MCF 10A (cell line): ENCODE measurements at regions of chr1 and their contacts with region 1.

Region 1: GRCh38 chr1:46477153-46477929 is 12.3 kb upstream of the DMBX1 start:
- DNase-seq: peak; percentile 83
- H3K4me3 Mint-ChIP-seq: no peak overlapping the region
- H3K27ac Mint-ChIP-seq: no peak overlapping the region
- H3K4me1 Mint-ChIP-seq: no peaks in the 10 kb centered on the region
- H3K27me3 Mint-ChIP-seq: no peaks in the 10 kb centered on the region
- CTCF ChIP-seq: peak; percentile 97

Region 2: GRCh38 chr1:46442317-46443161 is 34.8 kb before region 1 on chr1:
- CTCF ChIA-PET with region 1: interaction called, 6 read pairs
- POLR2A ChIA-PET with region 1: no interaction called
- intact Hi-C with region 1: loop called (anchors 2 kb)
- DNase-seq: peak; percentile 94
- H3K4me3 Mint-ChIP-seq: peak overlapping the region; percentile 77
- H3K27ac Mint-ChIP-seq: no peak overlapping the region
- H3K4me1 Mint-ChIP-seq: peaks cover 13% of the 10 kb centered on the region
- H3K27me3 Mint-ChIP-seq: peaks cover 21% of the 10 kb centered on the region
- CTCF ChIP-seq: peak; percentile 85

Region 3: DNA sequence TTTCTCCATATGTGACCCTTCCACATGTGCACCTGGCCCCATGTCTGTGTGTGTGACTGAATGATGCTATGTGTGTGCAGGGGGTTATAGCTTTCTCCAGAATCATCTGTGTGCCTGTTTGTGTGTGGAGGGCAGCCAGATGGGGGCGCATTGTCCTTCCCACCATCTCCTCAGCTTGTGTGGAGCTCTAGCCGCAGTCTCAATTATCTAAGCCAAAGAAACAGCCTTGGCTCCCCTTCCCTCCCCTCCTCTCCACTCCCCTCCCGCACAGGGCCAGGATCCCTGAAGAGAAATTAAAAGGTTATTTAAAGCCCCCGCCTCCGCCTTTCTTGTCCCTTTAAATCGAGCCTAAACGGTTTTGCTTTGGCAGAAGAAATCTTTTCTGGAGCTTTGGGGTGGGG is 10.5 kb after region 1 on chr1:
- CTCF ChIA-PET with region 1: interaction called, 23 read pairs
- POLR2A ChIA-PET with region 1: no interaction called
- intact Hi-C with region 1: no loop called
- DNase-seq: peak; percentile 35
- H3K4me3 Mint-ChIP-seq: no peak overlapping the region
- H3K27ac Mint-ChIP-seq: no peak overlapping the region
- H3K4me1 Mint-ChIP-seq: peaks cover 12% of the 10 kb centered on the region
- H3K27me3 Mint-ChIP-seq: peaks cover 52% of the 10 kb centered on the region
- CTCF ChIP-seq: no peak

Region 4: DNA sequence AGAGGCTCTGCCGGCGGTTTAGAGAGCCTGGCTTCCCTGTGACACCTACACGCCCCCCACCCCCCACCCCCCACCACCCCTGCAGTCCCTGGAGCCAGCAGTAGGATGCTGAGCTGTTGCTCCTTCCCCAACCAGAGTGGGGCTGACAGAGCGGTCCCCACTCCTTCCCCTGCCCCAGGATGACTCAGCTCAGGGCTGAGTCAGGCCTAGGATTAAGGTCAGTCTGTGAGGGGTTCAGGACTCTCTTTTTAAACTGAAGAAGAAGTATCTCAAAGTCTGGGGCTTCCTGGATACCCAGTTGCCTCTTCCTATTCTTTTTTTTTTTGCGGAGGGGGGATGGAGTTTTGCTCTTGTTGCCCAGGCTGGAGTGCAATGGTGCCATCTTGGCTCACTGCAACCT is 31.4 kb after region 1 on chr1:
- CTCF ChIA-PET with region 1: interaction called, 14 read pairs
- POLR2A ChIA-PET with region 1: interaction called, 3 read pairs
- intact Hi-C with region 1: no loop called
- DNase-seq: peak; percentile 54
- H3K4me3 Mint-ChIP-seq: no peak overlapping the region
- H3K27ac Mint-ChIP-seq: no peak overlapping the region
- H3K4me1 Mint-ChIP-seq: no peaks in the 10 kb centered on the region
- H3K27me3 Mint-ChIP-seq: peaks cover 1% of the 10 kb centered on the region
- CTCF ChIP-seq: no peak

Region 5: DNA sequence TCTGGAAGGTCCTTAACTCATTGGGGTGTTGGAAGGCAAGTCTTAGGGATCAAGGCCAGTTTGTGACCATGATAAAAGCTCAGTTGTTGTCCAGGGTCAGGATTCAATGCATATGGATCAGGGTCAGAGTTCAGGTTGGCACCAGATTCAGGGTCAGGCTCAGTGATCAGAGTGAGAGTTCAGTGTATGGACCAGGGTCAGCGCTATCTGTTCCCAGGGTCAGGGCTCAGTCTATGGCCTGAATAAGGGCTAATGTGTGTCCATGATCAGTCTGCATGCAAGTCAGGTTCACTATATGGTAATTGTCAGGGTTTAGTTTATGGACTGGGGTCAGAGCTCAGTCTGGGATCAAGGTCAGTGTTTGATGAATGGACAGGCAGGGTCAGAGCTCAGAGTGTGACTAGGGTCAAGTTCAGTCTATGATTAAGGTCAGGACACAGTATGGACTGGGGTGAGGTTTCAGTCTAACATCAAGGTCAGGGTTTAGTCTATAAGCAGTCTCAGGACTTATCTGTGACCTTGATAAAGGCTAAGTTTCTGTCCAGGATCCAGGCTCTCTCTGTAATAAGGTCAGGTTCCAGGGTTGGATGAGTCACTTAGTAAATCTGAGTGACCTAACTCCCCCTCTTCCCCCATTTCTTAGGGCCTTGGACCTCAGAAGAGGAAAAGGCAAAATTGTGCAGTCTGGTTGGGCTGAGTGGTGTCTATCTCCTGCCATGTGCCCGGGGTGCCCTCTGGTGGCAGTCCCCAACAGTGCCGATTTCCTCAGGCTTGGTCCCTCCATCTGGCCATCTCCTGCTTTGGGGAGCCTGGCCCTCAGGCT is 50.3 kb after region 1 on chr1:
- CTCF ChIA-PET with region 1: interaction called, 223 read pairs
- POLR2A ChIA-PET with region 1: interaction called, 6 read pairs
- intact Hi-C with region 1: loop called (anchors 1 kb)
- DNase-seq: peak; percentile 84
- H3K4me3 Mint-ChIP-seq: no peak overlapping the region
- H3K27ac Mint-ChIP-seq: no peak overlapping the region
- H3K4me1 Mint-ChIP-seq: peaks cover 16% of the 10 kb centered on the region
- H3K27me3 Mint-ChIP-seq: peaks cover 14% of the 10 kb centered on the region
- CTCF ChIP-seq: peak; percentile 92

Region 6: GRCh38 chr1:46547481-46548383 is 70.4 kb after region 1 on chr1:
- CTCF ChIA-PET with region 1: interaction called, 18 read pairs
- POLR2A ChIA-PET with region 1: no interaction called
- intact Hi-C with region 1: no loop called
- DNase-seq: peak; percentile 73
- H3K4me3 Mint-ChIP-seq: no peak overlapping the region
- H3K27ac Mint-ChIP-seq: no peak overlapping the region
- H3K4me1 Mint-ChIP-seq: peaks cover under 1% of the 10 kb centered on the region
- H3K27me3 Mint-ChIP-seq: peaks cover 39% of the 10 kb centered on the region
- CTCF ChIP-seq: peak; percentile 66